GM18951 (cell line): ENCODE measurements at regions of chr2 and their contacts with region 1.

Region 1: GRCh38 chr2:233026192-233026813 is 6.2 kb upstream of the NEU2 start:
- POLR2A ChIP-seq: no peak

Region 2: DNA sequence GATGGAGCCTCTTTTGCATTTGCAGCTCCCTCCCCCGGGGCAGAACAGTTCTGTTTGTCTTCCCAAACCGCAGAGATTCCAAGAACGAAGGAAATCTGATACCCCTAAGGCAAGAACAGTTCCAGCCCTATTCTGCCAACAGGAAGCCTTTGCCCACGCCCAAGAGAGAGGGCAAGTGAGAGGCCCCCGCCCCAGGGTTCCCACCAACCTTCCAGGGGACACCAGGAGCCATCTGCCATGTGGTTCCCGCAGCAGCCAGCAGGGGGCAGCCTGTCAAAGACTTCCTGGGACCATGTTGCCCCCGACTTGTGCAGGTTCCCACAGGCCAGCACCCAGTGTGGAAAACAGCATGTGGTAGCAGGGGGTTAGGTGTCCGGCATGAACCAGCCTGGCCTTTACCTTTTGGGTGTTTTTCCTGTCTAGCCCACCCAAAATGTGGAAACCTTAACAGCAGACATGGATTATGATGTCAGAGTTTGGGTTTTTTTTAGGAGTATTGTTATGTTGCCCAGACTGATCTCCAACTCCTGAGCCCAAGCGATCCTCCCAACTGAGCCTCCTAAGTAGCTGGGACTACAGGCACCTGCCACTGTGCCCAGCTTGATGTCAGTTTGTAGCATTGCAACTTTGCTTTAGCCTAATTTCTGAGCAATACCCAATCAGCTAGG is 414.6 kb before region 1 on chr2:
- in situ Hi-C with region 1: loop called (anchors 25 kb)
- POLR2A ChIP-seq: no peak

Region 3: GRCh38 chr2:232973011-232973735 is 53.1 kb before region 1 on chr2:
- in situ Hi-C with region 1: no loop called
- POLR2A ChIP-seq: no peak